Activated CD4-positive, alpha-beta T cell treated with anti-CD3 and anti-CD28 coated beads for 36 hours (primary cell): ENCODE measurements at regions of chr6 and their contacts with region 1.

Region 1: GRCh38 chr6:30914076-30914853 is at the start of gene VARS2:
- DNase-seq: peak; percentile 92
- ATAC-seq: peak; percentile 98
- H3K4me3 Mint-ChIP-seq: peak within 1 kb of the TSS; percentile 87
- H3K27ac Mint-ChIP-seq: peak within 1 kb of the TSS; percentile 95
- H3K4me1 Mint-ChIP-seq: peaks cover 24% of the 10 kb centered on the region
- H3K27me3 Mint-ChIP-seq: no peaks in the 10 kb centered on the region
- total RNA-seq, gene VARS2: 68.1 to 81.1 TPM

Region 2: GRCh38 chr6:30212865-30213666 is 701.2 kb before region 1 on chr6 and contains the start of gene TRIM26:
- CTCF ChIA-PET with region 1: no interaction called
- POLR2A ChIA-PET with region 1: no interaction called
- intact Hi-C with region 1: loop called in 1 of 2 experiments (anchors 5 kb)
- DNase-seq: peak; percentile 98
- ATAC-seq: peak; percentile 90
- H3K4me3 Mint-ChIP-seq: peak within 1 kb of the TSS; percentile 89
- H3K27ac Mint-ChIP-seq: peak within 1 kb of the TSS; percentile 99
- H3K4me1 Mint-ChIP-seq: peaks cover 50% of the 10 kb centered on the region
- H3K27me3 Mint-ChIP-seq: no peaks in the 10 kb centered on the region
- total RNA-seq, gene TRIM26: 48.4 to 60.4 TPM

Region 3: GRCh38 chr6:30678964-30679726 is 235.1 kb before region 1 on chr6:
- CTCF ChIA-PET with region 1: interaction called, 12 read pairs
- POLR2A ChIA-PET with region 1: no interaction called
- intact Hi-C with region 1: no loop called
- DNase-seq: peak; percentile 96
- ATAC-seq: peak; percentile 37
- H3K4me3 Mint-ChIP-seq: peak overlapping the region; percentile 100
- H3K27ac Mint-ChIP-seq: peak overlapping the region; percentile 97
- H3K4me1 Mint-ChIP-seq: peaks cover 23% of the 10 kb centered on the region
- H3K27me3 Mint-ChIP-seq: no peaks in the 10 kb centered on the region

Region 4: DNA sequence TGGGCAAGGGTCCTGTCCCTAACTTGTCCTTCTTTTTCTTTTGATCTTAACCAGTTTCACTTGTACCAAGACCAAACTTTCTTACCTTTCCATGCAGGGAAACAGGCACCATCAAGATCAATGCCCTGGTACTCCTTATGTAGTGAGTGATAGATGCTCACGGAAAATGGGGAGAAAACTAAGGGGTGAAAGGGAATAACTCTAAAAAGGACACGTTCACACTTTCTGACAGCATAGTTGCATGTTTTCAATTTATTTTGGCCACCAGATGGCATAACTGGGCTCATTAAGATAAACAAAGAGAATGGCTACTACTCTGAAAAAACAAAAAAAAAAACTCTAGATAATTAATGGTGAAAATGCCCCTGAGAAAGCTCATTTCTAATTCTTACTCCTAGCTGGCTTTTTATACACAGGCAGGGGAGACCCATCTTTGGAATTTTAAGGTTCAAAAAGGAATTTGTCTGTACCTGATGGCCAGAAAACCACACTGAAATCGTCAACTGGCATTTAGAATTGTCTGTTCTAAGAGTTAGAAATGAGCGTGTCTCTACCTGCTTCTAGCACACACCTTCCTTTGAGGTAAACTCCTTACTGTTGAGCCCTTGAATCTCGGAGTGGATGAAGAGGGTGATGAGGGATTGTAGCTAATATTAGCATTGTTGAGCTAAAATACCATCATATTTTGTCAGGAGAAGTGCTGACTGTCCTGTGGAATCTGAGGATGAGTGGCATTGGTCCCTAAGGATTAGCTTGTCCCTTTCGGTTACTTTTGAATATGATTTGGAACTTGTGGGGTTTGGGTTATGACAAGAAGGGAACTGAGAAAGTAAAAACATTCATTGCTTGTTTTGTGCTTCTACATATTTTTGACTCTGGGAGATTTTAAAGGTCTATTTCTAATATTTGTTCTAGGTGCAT is 92.1 kb before region 1 on chr6:
- CTCF ChIA-PET with region 1: interaction called, 18 read pairs
- POLR2A ChIA-PET with region 1: interaction called, 3 read pairs
- intact Hi-C with region 1: no loop called
- DNase-seq: no peak
- ATAC-seq: no peak
- H3K4me3 Mint-ChIP-seq: no peak overlapping the region
- H3K27ac Mint-ChIP-seq: peak overlapping the region; percentile 70
- H3K4me1 Mint-ChIP-seq: peaks cover 74% of the 10 kb centered on the region
- H3K27me3 Mint-ChIP-seq: no peaks in the 10 kb centered on the region

Region 5: GRCh38 chr6:30926644-30927043 is 12.4 kb after region 1 on chr6:
- CTCF ChIA-PET with region 1: interaction called, 12 read pairs
- POLR2A ChIA-PET with region 1: no interaction called
- intact Hi-C with region 1: no loop called
- DNase-seq: no peak
- ATAC-seq: no peak
- H3K4me3 Mint-ChIP-seq: no peak overlapping the region
- H3K27ac Mint-ChIP-seq: no peak overlapping the region
- H3K4me1 Mint-ChIP-seq: no peaks in the 10 kb centered on the region
- H3K27me3 Mint-ChIP-seq: no peaks in the 10 kb centered on the region

Region 6: DNA sequence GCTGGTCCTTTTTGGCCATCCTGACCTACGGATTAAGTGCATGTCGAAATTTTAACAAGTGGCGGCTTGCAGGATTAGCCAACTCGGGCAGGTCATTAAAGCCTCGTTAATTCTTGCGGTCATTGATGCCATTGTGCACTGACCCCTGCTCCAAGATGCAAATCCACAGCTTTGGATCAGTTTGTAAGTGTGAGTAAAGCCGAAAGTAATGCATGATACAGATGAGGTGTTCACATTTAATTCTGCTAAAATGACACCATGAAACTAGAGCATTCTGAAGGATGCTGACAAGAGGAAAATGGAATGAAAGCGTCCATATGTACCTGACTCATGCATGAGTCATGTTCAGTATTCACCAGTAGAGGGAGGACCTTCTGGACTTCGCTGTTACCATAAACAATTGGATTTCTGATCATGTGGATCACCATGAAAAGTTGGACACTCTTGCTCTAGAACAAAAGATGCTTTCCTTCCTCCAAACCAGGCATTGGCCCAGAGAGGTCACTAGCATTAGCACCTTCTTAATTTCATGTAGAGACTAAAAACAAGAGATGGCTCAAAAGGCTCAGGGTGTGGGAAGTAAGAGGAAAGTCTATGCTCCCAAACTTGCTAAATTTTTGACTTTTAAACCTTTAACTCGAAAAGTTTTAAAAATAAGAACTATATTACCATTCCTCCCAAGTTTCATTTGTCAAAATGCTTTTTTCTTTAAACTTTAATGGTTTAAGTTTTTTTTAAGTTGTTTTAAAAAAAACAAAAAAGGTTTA is 144.0 kb after region 1 on chr6:
- CTCF ChIA-PET with region 1: interaction called, 6 read pairs
- POLR2A ChIA-PET with region 1: no interaction called
- intact Hi-C with region 1: loop called in 1 of 2 experiments (anchors 5 kb)
- DNase-seq: no peak
- ATAC-seq: peak; percentile 94
- H3K4me3 Mint-ChIP-seq: no peak overlapping the region
- H3K27ac Mint-ChIP-seq: no peak overlapping the region
- H3K4me1 Mint-ChIP-seq: peaks cover 5% of the 10 kb centered on the region
- H3K27me3 Mint-ChIP-seq: peaks cover 8% of the 10 kb centered on the region

Region 7: GRCh38 chr6:31079656-31080261 is 165.5 kb after region 1 on chr6:
- CTCF ChIA-PET with region 1: interaction called, 92 read pairs
- POLR2A ChIA-PET with region 1: interaction called, 3 read pairs
- intact Hi-C with region 1: loop called (anchors 1 to 2 kb)
- DNase-seq: peak; percentile 82
- ATAC-seq: peak; percentile 91
- H3K4me3 Mint-ChIP-seq: peak overlapping the region; percentile 49
- H3K27ac Mint-ChIP-seq: no peak overlapping the region
- H3K4me1 Mint-ChIP-seq: peaks cover 13% of the 10 kb centered on the region
- H3K27me3 Mint-ChIP-seq: no peaks in the 10 kb centered on the region

Region 8: GRCh38 chr6:31139599-31139998 is 225.3 kb after region 1 on chr6:
- CTCF ChIA-PET with region 1: no interaction called
- POLR2A ChIA-PET with region 1: no interaction called
- intact Hi-C with region 1: no loop called
- DNase-seq: no peak
- ATAC-seq: no peak
- H3K4me3 Mint-ChIP-seq: no peak overlapping the region
- H3K27ac Mint-ChIP-seq: no peak overlapping the region
- H3K4me1 Mint-ChIP-seq: peaks cover 6% of the 10 kb centered on the region
- H3K27me3 Mint-ChIP-seq: no peaks in the 10 kb centered on the region